ENCODE measurements at regions of chr13 and their contacts with region 1.

Region 1: GRCh38 chr13:27533155-27533643 is 82.8 kb upstream of the MTIF3 start:
- DNase-seq: peak; percentile 12 to 67 (median 52)
- ATAC-seq: peak; percentile 78
- H3K4me3 ChIP-seq: peak overlapping the region in 1 of 2 experiments; percentile 28
- H3K4me3 Mint-ChIP-seq: no peak overlapping the region
- H3K27ac ChIP-seq: no peak overlapping the region
- H3K27ac Mint-ChIP-seq: no peak overlapping the region
- H3K4me1 ChIP-seq: peaks cover 10% of the 10 kb centered on the region
- H3K4me1 Mint-ChIP-seq: peaks cover 7% of the 10 kb centered on the region
- H3K27me3 ChIP-seq: no peaks in the 10 kb centered on the region
- H3K27me3 Mint-ChIP-seq: peaks cover 3% of the 10 kb centered on the region
- CTCF ChIP-seq: peak; percentile 74

Region 2: GRCh38 chr13:27406178-27406939 is 126.8 kb before region 1 on chr13:
- CTCF ChIA-PET with region 1: interaction called, 5 read pairs
- POLR2A ChIA-PET with region 1: no interaction called
- intact Hi-C with region 1: loop called in 1 of 2 experiments (anchors 2 kb)
- DNase-seq: peak in 7 of 9 experiments; percentile 18 to 77 (median 44)
- ATAC-seq: peak; percentile 56
- H3K4me3 ChIP-seq: no peak overlapping the region
- H3K4me3 Mint-ChIP-seq: no peak overlapping the region
- H3K27ac ChIP-seq: no peak overlapping the region
- H3K27ac Mint-ChIP-seq: no peak overlapping the region
- H3K4me1 ChIP-seq: no peaks in the 10 kb centered on the region
- H3K4me1 Mint-ChIP-seq: peaks cover 4% of the 10 kb centered on the region
- H3K27me3 ChIP-seq: no peaks in the 10 kb centered on the region
- H3K27me3 Mint-ChIP-seq: no peaks in the 10 kb centered on the region
- CTCF ChIP-seq: peak; percentile 54

Region 3: DNA sequence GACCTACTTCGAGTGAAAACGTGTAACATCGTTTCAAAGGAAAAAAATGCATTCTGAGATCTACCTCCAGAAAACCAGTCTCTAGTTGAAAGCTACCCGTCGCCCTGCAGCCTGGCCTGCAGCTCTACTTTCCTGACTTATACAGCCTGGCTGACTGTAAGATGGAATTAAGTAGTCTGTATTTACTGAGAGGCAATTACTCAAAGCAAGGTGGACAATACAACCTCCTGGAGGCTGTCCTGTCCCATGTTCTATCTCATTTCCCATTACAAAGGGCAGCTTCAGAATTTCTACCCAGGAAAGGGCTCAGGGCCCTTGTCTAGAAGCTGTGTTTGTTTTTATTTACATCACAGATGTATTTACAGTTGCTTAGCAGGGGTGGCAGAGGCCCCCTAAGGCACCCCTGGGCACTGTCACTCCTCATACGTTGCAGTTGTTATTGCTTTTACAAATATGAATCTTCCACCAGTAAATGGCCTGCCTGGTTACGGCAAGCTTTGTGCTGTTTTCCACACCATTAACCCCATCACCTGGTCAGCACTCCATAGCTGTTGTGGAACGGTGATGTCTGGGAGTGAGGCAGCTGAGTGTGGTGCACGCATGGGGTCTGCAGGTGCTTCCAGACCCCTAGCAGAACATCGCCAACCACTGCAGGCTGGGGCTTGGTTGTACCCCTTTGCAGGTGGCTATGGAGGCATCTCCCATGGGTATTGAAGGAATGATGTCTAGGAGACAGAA is 36.5 kb before region 1 on chr13:
- CTCF ChIA-PET with region 1: no interaction called
- POLR2A ChIA-PET with region 1: no interaction called
- intact Hi-C with region 1: no loop called
- DNase-seq: no peak
- ATAC-seq: no peak
- H3K4me3 ChIP-seq: no peak overlapping the region
- H3K4me3 Mint-ChIP-seq: no peak overlapping the region
- H3K27ac ChIP-seq: no peak overlapping the region
- H3K27ac Mint-ChIP-seq: no peak overlapping the region
- H3K4me1 ChIP-seq: no peaks in the 10 kb centered on the region
- H3K4me1 Mint-ChIP-seq: no peaks in the 10 kb centered on the region
- H3K27me3 ChIP-seq: no peaks in the 10 kb centered on the region
- H3K27me3 Mint-ChIP-seq: no peaks in the 10 kb centered on the region
- CTCF ChIP-seq: no peak

Region 4: DNA sequence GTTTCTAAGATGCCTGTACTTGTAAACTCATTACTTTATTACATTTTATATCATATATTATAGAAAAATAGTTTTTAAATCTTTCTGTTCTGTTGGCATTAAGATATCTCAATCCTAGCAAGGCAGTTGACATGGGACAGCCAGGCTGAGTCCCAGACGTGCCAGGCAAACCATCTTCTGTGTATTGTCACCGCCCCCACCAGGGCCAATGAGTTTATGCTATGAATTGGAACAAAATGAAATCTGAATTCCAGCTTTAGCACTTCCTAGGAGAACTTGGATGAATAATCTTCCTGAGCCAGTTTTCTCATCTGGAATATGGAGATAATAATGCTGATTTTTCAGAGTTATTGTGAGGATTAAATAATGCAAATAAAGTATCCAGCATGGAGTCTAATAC is 179.2 kb after region 1 on chr13:
- CTCF ChIA-PET with region 1: interaction called, 5 read pairs
- POLR2A ChIA-PET with region 1: no interaction called
- intact Hi-C with region 1: loop called (anchors 2 to 5 kb)
- DNase-seq: peak in 5 of 9 experiments; percentile 27 to 58 (median 36)
- ATAC-seq: no peak
- H3K4me3 ChIP-seq: no peak overlapping the region
- H3K4me3 Mint-ChIP-seq: no peak overlapping the region
- H3K27ac ChIP-seq: no peak overlapping the region
- H3K27ac Mint-ChIP-seq: no peak overlapping the region
- H3K4me1 ChIP-seq: no peaks in the 10 kb centered on the region
- H3K4me1 Mint-ChIP-seq: no peaks in the 10 kb centered on the region
- H3K27me3 ChIP-seq: no peaks in the 10 kb centered on the region
- H3K27me3 Mint-ChIP-seq: peaks cover 16% of the 10 kb centered on the region
- CTCF ChIP-seq: peak; percentile 21

Region 5: DNA sequence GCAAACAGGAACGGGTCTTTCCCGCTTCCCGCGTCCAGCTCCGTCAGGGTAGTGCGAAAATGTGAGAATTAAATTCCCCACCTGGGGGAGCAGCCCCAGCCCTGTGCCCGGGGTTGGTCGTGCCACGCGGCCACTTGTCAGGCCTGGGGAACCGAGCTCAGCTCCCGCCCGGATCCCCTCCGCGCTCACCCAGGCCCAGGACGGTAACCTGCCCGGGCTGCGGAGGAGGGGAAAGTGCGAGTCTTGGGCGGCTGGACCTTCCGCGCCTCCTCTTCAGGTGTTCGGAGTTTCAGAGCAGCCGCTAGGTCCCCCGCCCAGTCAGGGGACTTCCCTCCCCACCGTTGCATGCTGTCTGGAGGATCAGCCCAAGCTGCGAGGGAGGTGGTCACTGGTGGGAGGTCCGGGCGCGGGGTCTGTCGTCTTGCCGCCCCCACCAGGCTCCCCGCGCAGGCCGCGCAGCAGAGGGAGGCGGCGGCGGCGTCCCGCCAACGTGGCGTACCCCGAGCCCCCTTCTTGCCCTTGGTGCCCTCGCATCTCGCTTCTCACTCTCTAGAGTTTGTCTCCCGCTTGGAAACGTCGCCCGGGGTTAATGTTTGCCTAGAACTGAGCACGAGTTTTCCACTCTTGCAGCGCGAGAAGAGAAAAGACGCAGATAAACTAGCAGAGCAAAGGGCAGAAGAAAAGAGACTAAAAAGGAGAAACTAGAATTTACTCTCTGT is 447.2 kb after region 1 on chr13:
- CTCF ChIA-PET with region 1: no interaction called
- POLR2A ChIA-PET with region 1: no interaction called
- intact Hi-C with region 1: loop called in 1 of 2 experiments (anchors 10 kb)
- DNase-seq: no peak
- ATAC-seq: no peak
- H3K4me3 ChIP-seq: no peak overlapping the region
- H3K4me3 Mint-ChIP-seq: no peak overlapping the region
- H3K27ac ChIP-seq: no peak overlapping the region
- H3K27ac Mint-ChIP-seq: no peak overlapping the region
- H3K4me1 ChIP-seq: no peaks in the 10 kb centered on the region
- H3K4me1 Mint-ChIP-seq: peaks cover 29% of the 10 kb centered on the region
- H3K27me3 ChIP-seq: peaks cover 6 to 24% of the 10 kb centered on the region in 2 experiments
- H3K27me3 Mint-ChIP-seq: peaks cover 64% of the 10 kb centered on the region
- CTCF ChIP-seq: no peak

Measured in CD8-positive, alpha-beta T cell (primary cell).